Body of pancreas (tissue), 4 donors: ENCODE measurements at regions of chr11 and their contacts with region 1.

Region 1: GRCh38 chr11:27485930-27486773 is 13.6 kb upstream of the LGR4 start:
- DNase-seq: peak; percentile 49 to 63 (median 58)
- ATAC-seq: peak; percentile 75
- H3K4me3 ChIP-seq: no peak overlapping the region
- H3K27ac ChIP-seq: no peak overlapping the region
- H3K4me1 ChIP-seq: peaks cover 4% of the 10 kb centered on the region
- H3K27me3 ChIP-seq: no peaks in the 10 kb centered on the region
- CTCF ChIP-seq: peak; percentile 85 to 98 (median 97)
- POLR2A ChIP-seq: no peak

Region 2: DNA sequence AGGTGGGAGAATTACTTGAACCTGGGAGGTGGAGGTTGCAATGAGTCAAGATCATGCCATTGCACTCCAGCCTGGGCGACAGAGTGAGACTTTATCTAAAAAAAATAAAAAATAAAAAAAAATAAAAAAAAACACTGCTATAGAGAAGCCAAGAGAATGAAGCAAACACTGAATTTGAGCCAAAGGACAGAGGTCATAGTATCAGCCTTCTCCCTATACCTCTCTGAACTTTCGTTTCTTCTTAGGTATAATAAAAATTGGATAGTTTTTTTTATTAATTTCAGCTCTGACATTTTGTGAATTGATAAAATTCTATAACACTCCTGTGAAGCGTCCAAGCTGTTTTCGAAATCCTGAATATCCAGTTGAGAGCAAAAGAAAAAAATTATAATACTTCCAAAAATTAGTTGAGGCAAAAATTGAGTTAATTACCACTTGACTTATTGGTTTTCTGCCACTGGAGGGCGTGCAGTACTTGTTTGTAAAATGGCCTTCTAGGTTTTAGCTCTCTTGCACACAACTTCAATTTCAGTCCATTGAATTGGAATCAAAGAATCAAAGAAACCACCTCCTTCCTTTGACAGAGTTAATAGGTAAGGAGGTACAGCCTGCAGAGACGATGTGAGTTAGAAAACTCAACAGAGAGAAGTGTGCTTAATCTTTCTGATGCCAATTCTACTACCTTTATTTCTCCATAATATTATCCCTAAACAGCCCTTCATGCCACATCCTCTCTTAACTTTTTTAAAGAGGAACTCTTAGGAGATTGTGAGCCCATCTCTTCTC is 302.3 kb before region 1 on chr11:
- intact Hi-C with region 1: loop called (anchors 5 kb)
- DNase-seq: peak; percentile 69 to 74 (median 72)
- ATAC-seq: peak; percentile 67
- H3K4me3 ChIP-seq: no peak overlapping the region
- H3K27ac ChIP-seq: no peak overlapping the region
- H3K4me1 ChIP-seq: peaks cover 24% of the 10 kb centered on the region
- H3K27me3 ChIP-seq: no peaks in the 10 kb centered on the region
- CTCF ChIP-seq: peak; percentile 48 to 91 (median 85)
- POLR2A ChIP-seq: no peak

Region 3: DNA sequence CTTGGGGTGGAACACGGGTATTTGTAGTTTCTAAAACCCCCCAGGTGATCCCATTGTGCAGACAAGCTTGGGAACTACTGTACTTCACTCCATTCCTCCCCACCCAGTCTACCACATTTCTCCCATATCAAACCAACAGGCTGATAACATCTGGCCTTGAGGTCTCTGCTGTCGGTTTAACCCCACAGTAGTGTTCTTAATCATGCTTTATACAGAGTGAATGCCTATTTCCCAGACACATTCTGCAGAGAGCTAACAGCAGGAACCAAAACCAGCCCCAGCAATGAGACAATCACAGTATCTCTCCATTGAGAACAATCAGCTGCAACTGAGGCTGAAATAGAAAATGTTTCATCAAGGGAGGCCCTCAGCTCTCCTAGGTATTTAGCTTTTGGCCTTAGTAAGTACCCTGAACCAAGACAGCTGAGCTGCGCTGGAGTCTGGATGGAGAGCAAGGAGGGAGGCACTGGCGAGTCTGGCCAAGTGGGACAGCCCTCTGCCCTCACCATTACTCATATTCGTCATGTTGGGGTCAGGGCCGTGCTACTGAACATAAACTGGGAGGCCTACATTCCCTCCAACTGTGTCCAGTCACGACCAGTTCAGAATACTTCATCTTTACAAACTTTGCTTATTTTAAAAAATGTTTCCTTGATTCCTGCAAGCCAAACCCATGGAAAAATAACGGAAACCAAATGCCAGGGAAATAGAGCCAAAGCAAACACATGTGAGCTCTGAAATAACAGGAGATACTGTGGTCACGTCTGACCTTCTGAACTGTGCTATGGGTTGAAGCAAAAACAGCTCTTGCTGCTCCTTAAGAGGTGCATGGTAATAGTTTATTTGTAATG is 204.2 kb before region 1 on chr11:
- intact Hi-C with region 1: loop called (anchors 10 kb)
- DNase-seq: peak in 1 of 4 donors; percentile 37
- ATAC-seq: peak; percentile 71
- H3K4me3 ChIP-seq: no peak overlapping the region
- H3K27ac ChIP-seq: no peak overlapping the region
- H3K4me1 ChIP-seq: peaks cover 15% of the 10 kb centered on the region
- H3K27me3 ChIP-seq: no peaks in the 10 kb centered on the region
- CTCF ChIP-seq: no peak
- POLR2A ChIP-seq: no peak